Activated CD8-positive, alpha-beta T cell treated with anti-CD3 and anti-CD28 coated beads, Interleukin-2, amount 10 ng/mL, durations not matched to agents 7 days and 5 days (primary cell): ENCODE measurements at regions of chr1 and their contacts with region 1.

Region 1: DNA sequence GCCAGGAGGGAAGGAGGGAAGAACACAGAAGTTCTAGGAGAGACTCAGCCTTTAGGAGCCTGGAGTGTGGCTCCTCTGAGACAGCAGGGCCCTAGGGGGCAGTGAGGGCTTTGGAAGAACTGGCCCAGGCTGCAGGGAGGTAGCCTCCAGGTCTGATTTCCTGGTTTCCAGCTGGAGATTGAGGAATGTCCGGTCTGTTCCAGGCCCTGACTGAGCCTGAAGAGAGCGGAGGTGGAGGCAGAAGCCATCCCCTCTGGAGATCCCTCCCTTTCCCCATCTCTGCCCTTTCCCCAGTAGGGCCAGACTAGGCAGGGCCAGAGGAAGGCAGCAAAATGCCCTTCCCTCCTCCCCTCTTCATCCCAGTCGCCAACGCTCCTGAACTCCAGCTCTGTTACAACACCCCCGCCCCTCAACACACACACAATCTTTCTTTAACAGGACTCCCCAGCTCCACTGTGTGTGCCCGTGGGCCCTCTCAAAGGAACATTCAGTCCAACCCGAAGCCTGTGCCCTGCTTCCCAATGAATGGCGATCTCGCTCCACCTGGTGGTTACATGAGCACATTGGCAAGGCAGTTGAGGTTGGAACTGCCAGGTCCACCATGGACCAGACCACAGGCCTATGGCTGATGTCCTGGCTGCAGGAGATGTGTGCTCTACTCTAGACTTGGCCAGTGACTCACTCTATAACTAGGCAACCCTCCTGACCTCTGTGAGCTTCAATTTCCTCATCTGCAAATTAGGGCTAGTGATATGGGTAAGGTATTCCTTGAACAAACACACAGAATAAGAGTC is 32.0 kb downstream of the MAP7D1 start:
- DNase-seq: peak; percentile 87
- ATAC-seq: peak; percentile 99
- H3K4me3 Mint-ChIP-seq: no peak overlapping the region
- H3K27ac Mint-ChIP-seq: peak overlapping the region; percentile 73
- H3K4me1 Mint-ChIP-seq: peaks cover 5% of the 10 kb centered on the region
- H3K27me3 Mint-ChIP-seq: no peaks in the 10 kb centered on the region

Region 2: DNA sequence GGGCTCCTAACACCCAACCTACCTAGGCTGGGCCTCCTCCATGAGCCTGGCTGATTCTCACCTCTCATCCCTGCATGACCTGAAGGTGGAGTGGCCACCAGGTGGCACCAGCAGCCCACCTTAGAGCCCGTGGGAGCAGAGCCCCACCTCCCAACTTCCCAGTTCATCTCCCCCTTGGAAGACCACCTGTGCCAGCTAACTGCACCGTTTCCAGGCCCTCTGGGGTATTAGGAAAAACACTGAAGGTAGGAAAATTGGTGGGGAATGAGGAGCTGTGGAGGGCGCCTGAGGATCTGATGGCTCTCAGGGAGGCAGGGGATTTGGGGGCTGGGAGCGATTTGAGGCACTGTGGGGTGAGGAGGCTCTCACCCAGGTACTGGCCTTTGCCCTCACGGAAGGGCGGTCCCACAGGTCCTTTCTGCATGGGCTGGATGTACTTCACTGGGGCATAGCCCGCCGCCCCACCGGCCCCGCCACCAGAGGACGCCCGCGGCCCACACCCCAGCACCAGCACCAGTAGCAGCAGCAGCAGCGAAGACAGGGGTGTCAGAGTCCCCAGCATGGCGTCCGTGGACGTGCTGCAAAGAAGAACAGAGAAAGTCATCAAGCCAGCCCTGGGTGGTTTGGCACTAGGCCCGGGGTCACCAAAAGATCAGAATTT is 88.2 kb before region 1 on chr1:
- CTCF ChIA-PET with region 1: interaction called, 26 read pairs
- POLR2A ChIA-PET with region 1: no interaction called
- DNase-seq: peak; percentile 83
- ATAC-seq: peak; percentile 93
- H3K4me3 Mint-ChIP-seq: no peak overlapping the region
- H3K27ac Mint-ChIP-seq: no peak overlapping the region
- H3K4me1 Mint-ChIP-seq: peaks cover 10% of the 10 kb centered on the region
- H3K27me3 Mint-ChIP-seq: no peaks in the 10 kb centered on the region

Region 3: DNA sequence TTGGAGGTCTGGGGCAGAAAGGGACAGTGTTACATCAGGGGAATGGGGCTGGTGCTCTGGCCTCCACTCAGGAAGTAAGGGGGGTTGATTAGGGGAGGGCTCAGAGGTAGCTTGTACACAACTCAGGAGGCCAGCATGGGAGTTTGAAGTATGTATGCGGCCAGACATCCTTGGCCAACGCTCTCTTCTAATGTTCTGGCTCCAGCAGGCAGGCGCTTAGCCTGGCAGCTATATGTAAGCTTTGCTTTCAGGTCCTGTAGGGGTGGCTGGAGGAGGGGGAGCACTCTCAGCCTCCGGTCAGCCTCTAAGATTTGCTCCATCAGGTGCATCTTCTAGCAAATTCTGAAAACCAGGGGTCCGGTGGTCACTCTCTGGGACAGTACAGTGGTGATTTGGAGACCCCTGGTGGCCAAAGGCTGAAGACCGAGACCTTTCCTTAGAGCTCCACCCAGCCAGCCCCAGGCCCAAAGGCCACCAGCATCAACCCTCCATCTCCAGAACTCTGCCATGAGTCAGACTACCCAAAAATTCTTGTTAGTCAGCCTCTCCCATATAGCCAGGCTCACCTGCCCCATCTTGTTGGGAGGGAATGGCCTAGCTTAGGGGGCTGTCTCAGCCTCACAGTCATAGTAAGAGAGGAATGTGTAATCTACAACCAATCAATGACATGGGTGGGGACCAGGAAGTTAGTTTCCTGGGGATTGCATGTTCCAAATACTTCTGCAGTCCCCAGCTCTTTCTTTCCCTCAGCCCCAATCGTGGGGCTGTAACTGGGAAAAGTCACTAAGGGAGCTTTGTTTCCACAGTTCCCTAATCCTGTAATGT is 53.3 kb before region 1 on chr1:
- CTCF ChIA-PET with region 1: interaction called, 15 read pairs
- POLR2A ChIA-PET with region 1: no interaction called
- DNase-seq: peak; percentile 66
- ATAC-seq: peak; percentile 78
- H3K4me3 Mint-ChIP-seq: no peak overlapping the region
- H3K27ac Mint-ChIP-seq: peak overlapping the region; percentile 9
- H3K4me1 Mint-ChIP-seq: peaks cover 9% of the 10 kb centered on the region
- H3K27me3 Mint-ChIP-seq: no peaks in the 10 kb centered on the region

Region 4: DNA sequence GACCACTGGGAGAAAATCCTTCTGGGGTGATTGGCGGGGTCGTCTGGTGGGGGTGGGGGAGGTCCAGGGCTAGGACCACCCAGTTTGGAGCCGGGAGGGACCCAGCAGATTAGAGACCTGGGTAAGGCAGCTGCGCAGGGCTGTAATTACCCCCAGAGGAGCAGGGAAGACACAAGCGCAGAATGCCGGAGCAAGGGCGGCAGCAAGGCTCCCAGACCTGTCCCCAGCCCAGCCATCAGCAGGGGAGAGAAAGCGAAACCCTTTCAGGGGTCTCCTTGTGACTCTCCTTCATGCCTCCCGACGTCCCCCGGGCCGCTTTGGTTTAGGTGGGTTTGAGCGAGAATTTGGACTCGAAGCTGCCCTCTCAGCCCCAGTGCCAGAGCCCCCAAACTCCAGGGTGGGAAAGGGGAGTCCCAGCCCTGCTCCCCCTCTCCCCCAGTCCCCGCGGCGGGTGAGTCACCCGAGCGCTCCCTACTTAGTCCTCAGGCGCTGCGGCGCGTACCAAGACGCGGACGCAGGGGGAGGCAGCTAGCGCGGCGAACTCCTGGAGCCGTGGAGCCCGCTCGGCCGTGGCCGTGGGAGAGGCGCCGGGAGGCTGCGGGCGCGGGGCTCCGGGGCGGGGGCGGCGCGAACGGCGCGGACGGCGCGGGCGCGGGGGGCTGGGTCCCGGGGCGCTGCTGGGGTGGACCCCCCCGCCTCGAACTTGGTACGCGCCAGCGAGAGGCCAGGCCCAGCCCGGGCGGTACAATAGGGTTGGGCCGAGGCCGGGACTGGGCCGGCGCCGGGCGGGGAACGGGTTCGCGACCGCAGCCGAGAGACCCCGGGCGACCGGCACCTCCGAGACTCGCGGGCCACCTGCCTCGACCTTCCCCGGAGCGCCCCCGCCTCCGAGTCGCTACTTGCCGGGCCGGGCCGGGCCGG is 32.3 kb before region 1 on chr1 and contains the start of gene MAP7D1:
- CTCF ChIA-PET with region 1: interaction called, 209 read pairs
- POLR2A ChIA-PET with region 1: interaction called, 27 read pairs
- DNase-seq: peak; percentile 85
- ATAC-seq: peak; percentile 72
- H3K4me3 Mint-ChIP-seq: peak within 1 kb of the TSS; percentile 92
- H3K27ac Mint-ChIP-seq: peak within 1 kb of the TSS; percentile 94
- H3K4me1 Mint-ChIP-seq: peaks cover 74% of the 10 kb centered on the region
- H3K27me3 Mint-ChIP-seq: no peaks in the 10 kb centered on the region
- total RNA-seq, gene MAP7D1: 235 to 245 TPM

Region 5: GRCh38 chr1:36160949-36161485 is 27.0 kb before region 1 on chr1:
- CTCF ChIA-PET with region 1: interaction called, 60 read pairs
- POLR2A ChIA-PET with region 1: interaction called, 18 read pairs
- DNase-seq: peak; percentile 84
- ATAC-seq: peak; percentile 43
- H3K4me3 Mint-ChIP-seq: peak overlapping the region; percentile 72
- H3K27ac Mint-ChIP-seq: peak overlapping the region; percentile 89
- H3K4me1 Mint-ChIP-seq: peaks cover 68% of the 10 kb centered on the region
- H3K27me3 Mint-ChIP-seq: no peaks in the 10 kb centered on the region

Region 6: GRCh38 chr1:36170643-36171412 is 17.2 kb before region 1 on chr1:
- CTCF ChIA-PET with region 1: interaction called, 11 read pairs
- POLR2A ChIA-PET with region 1: no interaction called
- DNase-seq: no peak
- ATAC-seq: no peak
- H3K4me3 Mint-ChIP-seq: no peak overlapping the region
- H3K27ac Mint-ChIP-seq: no peak overlapping the region
- H3K4me1 Mint-ChIP-seq: peaks cover 20% of the 10 kb centered on the region
- H3K27me3 Mint-ChIP-seq: no peaks in the 10 kb centered on the region